SK-N-SH (cell line): ENCODE measurements at regions of chr9 and their contacts with region 1.

Region 1: DNA sequence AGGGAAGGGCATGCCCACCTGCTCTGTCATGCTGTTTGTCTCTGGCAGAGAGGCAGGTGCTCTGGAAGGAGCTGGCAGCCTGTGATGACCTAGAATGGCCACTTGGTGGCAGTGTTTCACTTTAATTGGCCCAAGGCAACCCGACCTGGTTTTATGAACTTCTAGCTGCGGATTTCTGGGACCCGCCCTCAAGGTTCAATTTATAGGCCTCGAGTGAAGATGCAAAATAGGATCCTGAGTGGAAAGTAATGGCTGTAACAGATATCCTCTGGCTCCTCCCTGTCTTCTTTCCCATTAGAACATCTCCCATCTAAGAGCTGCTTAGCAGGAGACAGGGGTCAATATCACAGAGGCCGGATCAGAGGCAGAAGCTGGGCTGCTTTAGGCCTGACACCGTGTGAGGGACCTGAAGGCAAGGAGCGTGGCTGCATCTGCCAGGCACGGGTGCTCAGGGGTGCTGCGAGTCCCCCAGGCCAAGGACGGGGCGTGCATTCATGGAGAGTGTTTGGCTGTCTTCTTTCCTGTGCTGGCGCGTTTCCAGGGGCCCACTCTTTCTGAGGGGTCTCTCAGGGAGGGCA is 56.7 kb upstream of the SLC28A3 start:
- DNase-seq: peak; percentile 82
- H3K4me3 ChIP-seq: peak overlapping the region in 1 of 2 experiments; percentile 13; a peak in 1 of 4 replicates
- H3K27ac ChIP-seq: no peak overlapping the region
- H3K4me1 ChIP-seq: peaks cover 0 to 3% of the 10 kb centered on the region in 2 experiments; a peak in 1 of 4 replicates
- H3K27me3 ChIP-seq: no peaks in the 10 kb centered on the region
- CTCF ChIP-seq: peak; percentile 88
- EP300 ChIP-seq: no peak
- RAD21 ChIP-seq: peak; percentile 98

Region 2: DNA sequence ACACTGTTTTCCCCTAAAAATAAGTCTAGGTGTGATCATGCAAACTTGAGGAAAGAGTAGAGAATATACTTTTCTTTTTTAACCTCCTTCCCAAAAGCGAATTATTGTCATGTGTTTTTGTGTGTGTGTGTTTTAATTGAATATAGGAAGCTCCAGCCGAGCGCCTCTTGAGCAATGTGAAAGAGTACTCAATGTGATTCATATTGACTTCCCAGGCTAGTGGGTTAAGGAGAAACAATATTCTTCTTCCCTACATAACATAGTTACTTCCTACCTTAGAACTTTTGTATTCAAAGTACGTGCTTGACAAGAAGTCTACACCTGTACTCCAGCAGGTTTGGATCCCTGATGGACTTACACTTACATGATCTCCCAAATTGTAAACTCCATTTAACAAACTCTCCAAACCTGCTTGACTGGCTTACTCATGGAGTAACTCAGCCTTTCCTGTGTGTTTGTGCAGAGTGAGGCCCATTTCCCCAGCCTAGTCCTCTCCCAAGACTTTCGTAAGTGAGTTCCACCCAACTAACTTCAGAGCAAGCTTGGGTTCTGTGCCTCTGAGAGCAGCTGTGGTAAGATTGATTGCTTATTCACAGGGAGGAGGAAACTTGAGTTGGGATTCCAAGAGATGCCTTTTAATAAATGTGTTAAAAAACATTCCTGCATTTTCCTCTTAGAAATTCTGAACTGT is 66.0 kb before region 1 on chr9:
- CTCF ChIA-PET with region 1: no interaction called
- POLR2A ChIA-PET with region 1: no interaction called
- DNase-seq: no peak
- H3K4me3 ChIP-seq: no peak overlapping the region
- H3K27ac ChIP-seq: no peak overlapping the region
- H3K4me1 ChIP-seq: no peaks in the 10 kb centered on the region
- H3K27me3 ChIP-seq: no peaks in the 10 kb centered on the region
- CTCF ChIP-seq: no peak
- EP300 ChIP-seq: no peak
- RAD21 ChIP-seq: no peak

Region 3: GRCh38 chr9:84408416-84408815 is 11.2 kb after region 1 on chr9:
- CTCF ChIA-PET with region 1: interaction called, 28 read pairs
- POLR2A ChIA-PET with region 1: no interaction called
- DNase-seq: no peak
- H3K4me3 ChIP-seq: no peak overlapping the region
- H3K27ac ChIP-seq: no peak overlapping the region
- H3K4me1 ChIP-seq: no peaks in the 10 kb centered on the region
- H3K27me3 ChIP-seq: no peaks in the 10 kb centered on the region
- CTCF ChIP-seq: no peak
- EP300 ChIP-seq: no peak
- RAD21 ChIP-seq: no peak

Region 4: DNA sequence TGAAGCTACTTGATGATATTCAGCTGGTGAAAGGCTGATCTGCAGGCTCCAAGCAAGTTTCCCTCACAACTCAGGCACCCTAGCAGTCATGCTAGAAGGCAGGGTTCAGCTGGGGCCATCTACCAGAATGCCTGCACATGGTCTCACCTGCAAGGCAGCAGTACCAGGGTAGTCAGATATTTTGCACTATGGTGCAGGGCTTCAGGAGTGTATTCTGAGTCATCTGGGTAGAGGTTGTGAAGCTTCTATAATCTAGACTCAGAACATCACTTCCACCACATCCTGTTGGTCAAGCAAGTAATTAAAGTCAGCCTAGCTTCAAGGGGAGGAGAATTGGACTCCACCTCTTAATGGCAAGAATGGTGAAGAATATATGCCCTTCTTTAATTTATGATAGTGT is 103.0 kb after region 1 on chr9:
- CTCF ChIA-PET with region 1: no interaction called
- POLR2A ChIA-PET with region 1: no interaction called
- DNase-seq: no peak
- H3K4me3 ChIP-seq: no peak overlapping the region
- H3K27ac ChIP-seq: no peak overlapping the region
- H3K4me1 ChIP-seq: peaks cover 0 to 2% of the 10 kb centered on the region in 2 experiments; a peak in 1 of 4 replicates
- H3K27me3 ChIP-seq: no peaks in the 10 kb centered on the region
- CTCF ChIP-seq: no peak
- EP300 ChIP-seq: no peak
- RAD21 ChIP-seq: no peak

Region 5: GRCh38 chr9:84781458-84781857 is 384.2 kb after region 1 on chr9:
- CTCF ChIA-PET with region 1: interaction called, 21 read pairs
- POLR2A ChIA-PET with region 1: no interaction called
- DNase-seq: peak; percentile 15
- H3K4me3 ChIP-seq: no peak overlapping the region; a peak in 1 of 4 replicates
- H3K27ac ChIP-seq: no peak overlapping the region
- H3K4me1 ChIP-seq: no peaks in the 10 kb centered on the region
- H3K27me3 ChIP-seq: no peaks in the 10 kb centered on the region
- CTCF ChIP-seq: peak; percentile 68
- EP300 ChIP-seq: no peak
- RAD21 ChIP-seq: peak; percentile 60

Region 6: GRCh38 chr9:85142968-85143367 is 745.7 kb after region 1 on chr9:
- CTCF ChIA-PET with region 1: interaction called, 14 read pairs
- POLR2A ChIA-PET with region 1: no interaction called
- DNase-seq: peak; percentile 20
- H3K4me3 ChIP-seq: no peak overlapping the region
- H3K27ac ChIP-seq: no peak overlapping the region
- H3K4me1 ChIP-seq: no peaks in the 10 kb centered on the region; a peak in 1 of 4 replicates
- H3K27me3 ChIP-seq: no peaks in the 10 kb centered on the region
- CTCF ChIP-seq: peak; percentile 54
- EP300 ChIP-seq: no peak
- RAD21 ChIP-seq: peak; percentile 72

Region 7: GRCh38 chr9:85258823-85259370 is 861.7 kb after region 1 on chr9:
- CTCF ChIA-PET with region 1: interaction called, 28 read pairs
- POLR2A ChIA-PET with region 1: no interaction called
- DNase-seq: peak; percentile 69
- H3K4me3 ChIP-seq: no peak overlapping the region; a peak in 1 of 4 replicates
- H3K27ac ChIP-seq: no peak overlapping the region
- H3K4me1 ChIP-seq: peaks cover 0 to 5% of the 10 kb centered on the region in 2 experiments; a peak in 2 of 4 replicates
- H3K27me3 ChIP-seq: no peaks in the 10 kb centered on the region
- CTCF ChIP-seq: peak; percentile 75
- EP300 ChIP-seq: no peak
- RAD21 ChIP-seq: peak; percentile 97